GM10248 (cell line): ENCODE measurements at regions of chr7 and their contacts with region 1.

Region 1: GRCh38 chr7:3154912-3155494 is 111.3 kb upstream of the CARD11 start:
- DNase-seq: peak; percentile 68
- CTCF ChIP-seq: peak; percentile 73

Region 2: GRCh38 chr7:2886900-2887299 is 268.1 kb before region 1 on chr7:
- CTCF ChIA-PET with region 1: interaction called, 18 read pairs
- POLR2A ChIA-PET with region 1: no interaction called
- DNase-seq: peak; percentile 78
- CTCF ChIP-seq: peak; percentile 87

Region 3: DNA sequence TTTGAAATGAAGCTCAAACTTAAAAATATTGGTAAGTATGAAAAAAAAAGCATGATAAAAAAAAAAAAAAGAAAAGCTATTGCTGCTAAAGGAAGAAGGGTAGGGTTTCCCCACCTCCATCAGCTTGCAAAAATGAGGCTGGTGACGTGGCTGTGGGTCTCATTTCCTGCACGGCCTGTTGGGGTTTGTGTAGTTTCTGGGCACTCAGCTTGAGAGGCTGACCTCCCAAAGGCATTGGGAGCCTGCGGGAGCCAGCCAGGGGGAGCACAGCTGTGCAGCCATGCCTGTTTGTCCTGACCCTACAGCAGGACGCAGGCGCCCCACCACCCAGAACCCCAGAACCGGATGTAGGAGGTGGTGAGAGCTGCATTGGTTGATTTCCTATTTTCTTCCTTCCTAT is 62.5 kb before region 1 on chr7:
- CTCF ChIA-PET with region 1: interaction called, 11 read pairs
- POLR2A ChIA-PET with region 1: no interaction called
- DNase-seq: peak; percentile 77
- CTCF ChIP-seq: no peak

Region 4: GRCh38 chr7:3134715-3135114 is 20.3 kb before region 1 on chr7:
- CTCF ChIA-PET with region 1: interaction called, 10 read pairs
- POLR2A ChIA-PET with region 1: no interaction called
- DNase-seq: no peak
- CTCF ChIP-seq: no peak

Region 5: GRCh38 chr7:3210531-3210930 is 55.5 kb after region 1 on chr7:
- CTCF ChIA-PET with region 1: no interaction called
- POLR2A ChIA-PET with region 1: no interaction called
- DNase-seq: no peak
- CTCF ChIP-seq: no peak